MCF 10A (cell line): ENCODE measurements at regions of chr2 and their contacts with region 1.

Region 1: DNA sequence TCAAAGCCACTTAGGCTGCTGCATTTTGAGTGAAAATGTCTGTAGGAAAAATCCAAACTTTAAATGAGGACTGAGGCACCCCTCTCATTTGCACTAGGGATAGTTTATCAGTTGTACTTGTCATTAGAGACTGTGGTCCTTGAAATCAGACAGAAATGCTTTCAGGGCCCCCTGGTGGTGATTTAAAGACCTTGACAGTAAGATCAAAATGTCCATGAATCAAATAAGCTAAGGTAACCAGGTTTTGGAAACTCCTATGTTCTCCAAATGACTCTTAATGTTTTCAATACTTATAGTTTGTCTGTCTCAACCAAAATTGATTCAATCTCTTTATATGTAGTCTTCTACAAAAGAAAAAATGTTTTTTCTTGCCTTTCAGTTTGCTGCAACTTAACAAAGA is 28.8 kb upstream of the DDX18 start:
- DNase-seq: peak; percentile 72
- H3K4me3 Mint-ChIP-seq: no peak overlapping the region
- H3K27ac Mint-ChIP-seq: no peak overlapping the region
- H3K4me1 Mint-ChIP-seq: no peaks in the 10 kb centered on the region
- H3K27me3 Mint-ChIP-seq: no peaks in the 10 kb centered on the region
- CTCF ChIP-seq: peak; percentile 64

Region 2: DNA sequence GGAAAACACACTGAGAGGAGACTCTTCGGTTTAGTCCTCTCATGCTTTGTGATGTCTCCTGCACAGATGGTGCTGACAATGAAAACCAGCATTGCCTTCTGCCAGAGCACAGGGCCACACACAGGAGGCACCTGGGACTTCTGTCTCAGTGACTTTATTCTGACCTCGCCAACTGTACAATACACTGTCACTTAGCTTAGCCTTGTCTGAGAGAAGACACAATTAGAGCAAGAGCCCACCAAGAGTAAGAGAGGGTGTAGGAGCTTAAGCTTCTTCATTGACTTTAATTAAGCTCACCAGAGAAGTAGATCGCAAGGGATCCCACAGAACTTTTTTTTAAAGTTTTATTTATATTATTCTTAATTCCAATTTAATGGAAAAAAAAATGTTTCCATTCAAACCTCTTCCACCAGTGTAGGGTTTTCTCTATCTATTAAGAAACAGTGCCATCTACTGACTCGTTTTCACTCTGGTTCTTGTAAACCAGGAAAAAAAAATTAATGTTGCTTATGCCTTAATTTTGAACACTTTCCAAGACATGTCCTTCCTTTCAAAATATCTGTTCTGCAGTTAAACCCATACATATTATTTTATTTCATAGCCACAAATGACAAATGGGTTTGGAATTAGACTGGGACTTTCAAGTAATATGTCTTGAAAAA is 13.6 kb before region 1 on chr2:
- CTCF ChIA-PET with region 1: interaction called, 11 read pairs
- POLR2A ChIA-PET with region 1: no interaction called
- intact Hi-C with region 1: no loop called
- DNase-seq: peak; percentile 49
- H3K4me3 Mint-ChIP-seq: no peak overlapping the region
- H3K27ac Mint-ChIP-seq: no peak overlapping the region
- H3K4me1 Mint-ChIP-seq: peaks cover 15% of the 10 kb centered on the region
- H3K27me3 Mint-ChIP-seq: peaks cover 18% of the 10 kb centered on the region
- CTCF ChIP-seq: peak; percentile 35

Region 3: DNA sequence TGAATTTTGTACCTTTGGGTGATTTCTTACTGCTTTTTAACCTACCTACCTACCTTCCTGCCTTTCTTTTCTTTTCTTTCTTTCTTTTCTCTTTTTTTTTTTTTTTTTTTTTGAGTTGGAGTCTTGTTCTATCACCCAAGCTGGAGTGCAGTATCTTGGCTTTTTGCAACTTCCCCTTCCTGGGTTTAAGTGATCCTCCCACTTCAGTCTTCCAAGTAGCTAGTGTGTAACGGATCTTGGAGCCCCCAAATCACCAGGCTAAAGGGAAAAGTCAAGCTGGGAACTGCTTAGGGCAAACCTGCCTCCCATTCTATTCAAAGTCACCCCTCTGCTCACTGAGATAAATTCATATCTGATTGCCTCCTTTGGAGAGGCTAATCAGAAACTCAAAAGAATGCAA is 90.0 kb after region 1 on chr2:
- CTCF ChIA-PET with region 1: no interaction called
- POLR2A ChIA-PET with region 1: no interaction called
- intact Hi-C with region 1: no loop called
- DNase-seq: no peak
- H3K4me3 Mint-ChIP-seq: no peak overlapping the region
- H3K27ac Mint-ChIP-seq: no peak overlapping the region
- H3K4me1 Mint-ChIP-seq: no peaks in the 10 kb centered on the region
- H3K27me3 Mint-ChIP-seq: peaks cover 34% of the 10 kb centered on the region
- CTCF ChIP-seq: no peak